Sciatic nerve (tissue), 2 donors: ENCODE measurements at regions of chr20 and their contacts with region 1.

Region 1: DNA sequence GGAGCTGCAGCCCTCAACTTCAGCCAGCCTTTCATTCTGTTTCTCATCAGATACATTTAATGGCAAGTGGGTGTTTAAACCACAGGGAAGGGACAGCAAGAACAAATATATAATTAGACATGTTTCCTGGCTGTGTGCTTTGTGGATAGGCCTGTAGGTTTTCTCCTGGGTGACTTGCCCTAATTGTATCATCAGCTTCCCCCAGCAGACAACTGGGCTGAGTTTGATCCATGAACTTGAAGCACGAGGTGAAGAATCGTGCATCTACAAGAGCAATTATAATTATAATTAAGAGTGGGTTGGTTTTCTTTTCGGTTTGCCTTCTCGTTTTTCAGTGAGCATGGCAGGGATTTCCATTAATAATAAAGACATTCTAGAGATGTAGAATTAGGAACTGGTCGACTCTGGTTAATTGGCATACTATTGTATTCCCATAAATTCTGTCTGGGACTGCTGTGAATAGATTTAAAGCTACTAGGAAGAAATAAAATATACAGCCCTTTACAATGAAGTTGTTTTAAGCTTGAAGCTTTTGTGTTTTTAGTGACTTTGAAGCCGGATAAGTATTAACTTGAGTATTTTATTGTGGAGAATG is 1052.2 kb downstream of the KIF16B start:
- DNase-seq: no peak
- ATAC-seq: no peak

Region 2: GRCh38 chr20:14896569-14896968 is 624.5 kb before region 1 on chr20:
- intact Hi-C with region 1: no loop called
- DNase-seq: no peak
- ATAC-seq: no peak

Region 3: DNA sequence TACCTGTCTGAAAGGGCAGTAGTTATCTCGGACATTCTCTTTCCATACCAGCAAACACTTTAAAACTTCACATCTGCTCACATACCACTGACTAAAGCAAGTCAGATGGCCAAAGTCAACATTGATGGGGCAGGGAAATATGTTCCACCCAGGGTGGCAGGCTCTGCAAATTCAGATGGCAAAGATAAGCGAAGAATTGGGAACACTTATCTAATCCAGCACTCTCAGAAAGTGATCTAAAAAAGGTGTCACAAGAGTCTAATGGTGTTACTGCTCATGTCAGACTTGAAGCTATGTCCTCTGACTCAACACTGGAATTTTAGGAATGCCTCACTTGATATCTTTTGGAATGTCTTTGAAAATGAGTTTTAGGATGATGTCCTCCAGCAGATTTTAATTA is 34.0 kb before region 1 on chr20:
- intact Hi-C with region 1: loop called (anchors 1 kb)
- DNase-seq: no peak
- ATAC-seq: no peak